IMR-90 (cell line): ENCODE measurements at regions of chr6 and their contacts with region 1.

Region 1: DNA sequence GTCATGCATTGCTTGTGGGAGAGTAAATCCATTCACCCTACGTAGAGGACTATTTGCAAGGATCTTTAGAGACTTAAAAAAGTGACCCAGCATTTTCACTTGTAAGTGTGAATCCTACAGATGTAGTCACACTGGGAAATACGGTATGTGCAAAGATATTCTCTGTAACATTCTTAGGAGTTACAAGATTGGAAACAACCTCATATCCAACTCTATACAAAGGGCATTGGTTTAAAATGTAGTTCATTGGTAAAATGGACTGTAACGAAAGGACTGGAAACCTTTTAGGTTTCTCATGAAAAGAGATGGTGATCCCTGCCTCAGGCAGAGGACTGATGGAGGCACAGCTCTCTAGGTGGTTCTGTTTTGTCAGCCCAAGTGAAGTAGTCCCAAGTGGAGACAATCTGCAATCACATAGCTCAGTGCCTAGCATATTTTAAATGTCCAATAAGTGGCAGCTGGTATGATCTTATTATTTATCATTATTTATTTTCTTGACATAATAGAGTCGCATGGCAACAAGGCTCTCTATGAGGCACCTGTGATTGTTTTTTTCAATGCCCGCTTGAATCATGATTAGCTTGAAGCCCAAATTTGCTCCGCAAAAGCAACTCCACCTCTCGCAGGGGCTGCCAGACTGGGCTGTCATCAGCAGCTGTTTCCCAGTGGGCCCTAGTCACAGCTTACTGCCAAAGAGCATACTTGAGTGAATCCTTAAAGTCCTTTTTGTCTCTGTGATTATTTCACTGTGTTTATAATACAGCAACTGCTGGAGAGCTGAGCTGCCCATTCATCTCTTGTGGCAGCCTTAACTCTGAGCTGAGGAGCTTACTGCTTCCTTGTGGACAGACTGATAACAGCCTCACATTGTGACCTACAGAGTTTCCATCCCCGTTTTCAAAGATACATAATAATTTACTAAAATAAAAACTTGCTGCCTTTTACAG is 19.8 kb upstream of the ENPP1 start:
- DNase-seq: peak; percentile 72
- ATAC-seq: peak; percentile 85
- H3K4me3 ChIP-seq: no peak overlapping the region
- H3K27ac ChIP-seq: no peak overlapping the region
- H3K4me1 ChIP-seq: no peaks in the 10 kb centered on the region
- H3K27me3 ChIP-seq: no peaks in the 10 kb centered on the region
- CTCF ChIP-seq: peak; percentile 42
- POLR2A ChIP-seq: no peak
- RAD21 ChIP-seq: peak; percentile 60

Region 2: DNA sequence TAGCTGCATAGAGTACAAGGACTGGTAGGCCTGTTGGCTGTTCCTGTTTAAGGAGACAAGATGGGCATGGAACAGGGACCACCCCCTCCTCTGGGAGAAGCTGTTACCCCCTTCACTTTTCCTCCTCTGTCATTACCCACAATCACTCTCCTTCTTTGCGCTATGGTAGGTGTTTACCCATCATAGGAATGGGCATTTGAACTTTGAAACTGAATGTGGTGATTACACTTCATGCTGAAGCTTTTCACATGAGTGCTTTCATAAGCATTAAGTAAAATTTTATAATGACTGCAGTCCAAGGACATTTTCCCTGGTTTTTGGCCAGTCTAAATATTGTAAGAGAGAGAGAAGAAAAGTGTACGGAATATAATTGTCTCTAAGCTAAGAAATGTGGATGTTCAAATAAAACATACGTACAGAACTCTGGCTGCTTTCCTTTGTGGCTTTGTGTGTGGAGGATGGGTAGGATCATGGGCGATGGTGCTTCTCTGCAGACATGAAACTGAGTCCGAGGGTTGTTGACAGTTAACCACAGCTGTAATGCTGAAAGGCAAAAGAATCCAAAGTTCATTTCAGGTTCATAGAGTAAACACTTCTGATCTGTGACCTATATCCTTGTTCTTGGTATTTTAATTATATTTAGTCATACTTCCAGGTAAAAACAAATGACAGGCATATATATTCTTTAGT is 106.8 kb after region 1 on chr6:
- CTCF ChIA-PET with region 1: no interaction called
- POLR2A ChIA-PET with region 1: no interaction called
- dilution Hi-C with region 1: no loop called
- in situ Hi-C with region 1: no loop called
- intact Hi-C with region 1: loop called (anchors 5 kb)
- DNase-seq: no peak
- ATAC-seq: no peak
- H3K4me3 ChIP-seq: no peak overlapping the region
- H3K27ac ChIP-seq: no peak overlapping the region
- H3K4me1 ChIP-seq: 0 out of 2 replicates have a peak, but pooled peaks cover 3% of the 10 kb centered on the region
- H3K27me3 ChIP-seq: no peaks in the 10 kb centered on the region; the same call in 1 of the 2 replicates
- CTCF ChIP-seq: no peak
- POLR2A ChIP-seq: no peak
- RAD21 ChIP-seq: no peak

Region 3: GRCh38 chr6:132537145-132537544 is 749.1 kb after region 1 on chr6:
- CTCF ChIA-PET with region 1: no interaction called
- POLR2A ChIA-PET with region 1: no interaction called
- dilution Hi-C with region 1: no loop called
- in situ Hi-C with region 1: no loop called
- intact Hi-C with region 1: no loop called
- DNase-seq: no peak
- ATAC-seq: no peak
- H3K4me3 ChIP-seq: no peak overlapping the region
- H3K27ac ChIP-seq: no peak overlapping the region
- H3K4me1 ChIP-seq: no peaks in the 10 kb centered on the region
- H3K27me3 ChIP-seq: peaks cover 20% of the 10 kb centered on the region
- CTCF ChIP-seq: no peak
- POLR2A ChIP-seq: no peak
- RAD21 ChIP-seq: no peak